Motor neuron (in vitro differentiated cells): ENCODE measurements at regions of chr1 and their contacts with region 1.

Region 1: DNA sequence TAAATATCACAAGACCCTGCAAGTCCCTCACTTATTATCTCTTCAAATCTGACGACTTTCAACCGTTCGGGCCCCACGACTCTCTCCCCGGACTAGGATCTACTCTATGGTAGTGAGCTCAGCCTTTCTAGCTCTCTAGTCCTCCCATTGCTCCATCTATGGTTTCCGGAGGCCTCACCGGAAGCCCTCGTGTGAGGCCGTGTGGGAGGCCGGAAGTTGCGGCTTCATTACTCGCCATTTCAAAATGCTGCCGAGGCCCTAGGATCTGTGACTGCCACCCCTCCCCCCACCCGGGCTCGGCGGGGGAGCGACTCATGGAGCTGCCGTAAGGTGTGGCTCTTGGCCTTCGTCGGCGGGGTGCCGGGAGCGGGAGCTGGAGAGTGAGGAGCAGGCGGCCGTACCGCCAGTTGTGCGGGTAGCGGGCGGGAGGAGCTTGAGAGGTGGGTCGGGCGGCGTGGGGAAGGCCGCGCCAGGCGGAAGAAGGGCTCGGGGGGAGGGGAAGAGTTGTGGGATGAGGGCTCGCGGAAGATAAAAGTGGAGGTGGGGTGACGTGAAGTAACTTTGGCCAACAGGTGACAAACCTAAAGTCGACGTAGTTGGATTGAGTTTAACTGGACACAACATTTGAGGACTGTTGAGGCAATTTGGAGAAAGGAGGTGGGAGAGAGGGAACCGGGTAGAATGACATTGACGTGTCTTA is at the start of gene MDM4:
- ATAC-seq: peak; percentile 98 to 99 (median 99)
- H3K4me3 ChIP-seq: peak within 1 kb of the TSS; percentile 76 to 95 (median 94)
- H3K27ac ChIP-seq: peak within 1 kb of the TSS; percentile 96 to 97
- H3K4me1 ChIP-seq: peaks cover 11 to 14% of the 10 kb centered on the region in 2 donors
- total RNA-seq, gene MDM4: 28.7 to 139 (median 40.1) TPM

Region 2: DNA sequence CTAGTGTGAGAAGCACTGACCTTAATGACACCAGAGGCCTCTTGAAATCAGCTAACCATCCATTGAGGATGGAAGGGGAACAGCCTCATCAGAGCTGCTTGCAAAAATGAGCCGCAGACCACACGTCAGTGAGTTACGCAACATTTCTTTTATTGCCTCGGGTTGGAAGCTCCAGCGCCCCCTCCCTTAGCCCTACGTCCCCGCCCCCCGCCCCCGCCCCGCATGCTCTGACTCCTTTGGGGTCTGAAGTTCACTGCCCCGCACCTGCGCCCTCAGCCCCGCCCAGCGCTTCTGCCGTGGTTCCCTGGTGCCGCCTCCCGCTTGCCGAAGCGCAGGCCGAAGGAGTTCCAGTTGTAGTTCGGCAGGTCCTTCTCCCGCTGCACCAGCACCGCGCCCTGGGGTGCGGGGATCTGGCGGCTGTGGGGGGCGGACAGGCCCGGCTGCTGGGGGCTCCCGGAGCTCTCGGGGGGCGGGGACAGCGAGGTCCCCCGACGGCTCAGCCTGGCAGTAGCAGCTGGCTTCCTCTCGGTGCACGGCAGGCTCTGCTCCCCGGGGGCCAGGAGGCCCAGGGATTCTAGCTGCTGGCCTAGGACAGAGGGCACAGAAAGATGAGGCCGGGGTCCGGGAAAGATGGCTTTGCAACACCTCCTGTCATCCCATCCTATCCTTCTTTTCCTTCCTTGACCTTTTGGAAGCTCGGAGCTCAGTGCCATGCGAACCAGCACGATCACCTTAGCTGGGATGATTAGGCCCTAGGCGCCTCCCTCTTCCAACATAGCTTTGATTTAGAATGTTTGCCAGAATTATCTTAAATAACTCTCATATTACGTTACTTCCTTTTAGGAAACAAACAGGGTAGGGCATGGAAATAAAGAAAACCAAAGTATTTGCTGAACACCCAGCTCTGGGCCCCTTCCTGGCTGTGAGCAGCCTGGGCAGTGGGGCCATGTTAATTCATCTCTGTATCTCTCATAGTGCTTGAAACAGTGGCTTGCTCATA is 325.8 kb before region 1 on chr1:
- in situ Hi-C with region 1: loop called in 1 of 9 experiments (anchors 25 kb)
- ATAC-seq: peak; percentile 40 to 76 (median 60)
- H3K4me3 ChIP-seq: peak overlapping the region in 1 of 5 donors; percentile 10
- H3K27ac ChIP-seq: peak overlapping the region; percentile 49 to 72
- H3K4me1 ChIP-seq: peaks cover 39 to 47% of the 10 kb centered on the region in 2 donors